ENCODE measurements at regions of chr17 and their contacts with region 1.

Region 1: GRCh38 chr17:44363613-44364159 is at the start of gene FAM171A2:
- DNase-seq: peak; percentile 74
- H3K4me3 Mint-ChIP-seq: peak within 1 kb of the TSS; percentile 76
- H3K27ac Mint-ChIP-seq: no peak within 1 kb of the TSS
- H3K4me1 Mint-ChIP-seq: peaks cover 2% of the 10 kb centered on the region
- H3K27me3 Mint-ChIP-seq: peaks cover 89% of the 10 kb centered on the region

Region 2: GRCh38 chr17:44350733-44351226 is 12.9 kb before region 1 on chr17:
- CTCF ChIA-PET with region 1: interaction called, 34 read pairs
- DNase-seq: peak; percentile 83
- H3K4me3 Mint-ChIP-seq: no peak overlapping the region
- H3K27ac Mint-ChIP-seq: no peak overlapping the region
- H3K4me1 Mint-ChIP-seq: peaks cover 18% of the 10 kb centered on the region
- H3K27me3 Mint-ChIP-seq: peaks cover 17% of the 10 kb centered on the region

Region 3: GRCh38 chr17:44385287-44386181 is 21.8 kb after region 1 on chr17:
- CTCF ChIA-PET with region 1: no interaction called
- DNase-seq: peak; percentile 91
- H3K4me3 Mint-ChIP-seq: peak overlapping the region; percentile 69
- H3K27ac Mint-ChIP-seq: no peak overlapping the region
- H3K4me1 Mint-ChIP-seq: peaks cover 15% of the 10 kb centered on the region
- H3K27me3 Mint-ChIP-seq: peaks cover 83% of the 10 kb centered on the region